CD4-positive, alpha-beta memory T cell (primary cell): ENCODE measurements at regions of chr17 and their contacts with region 1.

Region 1: DNA sequence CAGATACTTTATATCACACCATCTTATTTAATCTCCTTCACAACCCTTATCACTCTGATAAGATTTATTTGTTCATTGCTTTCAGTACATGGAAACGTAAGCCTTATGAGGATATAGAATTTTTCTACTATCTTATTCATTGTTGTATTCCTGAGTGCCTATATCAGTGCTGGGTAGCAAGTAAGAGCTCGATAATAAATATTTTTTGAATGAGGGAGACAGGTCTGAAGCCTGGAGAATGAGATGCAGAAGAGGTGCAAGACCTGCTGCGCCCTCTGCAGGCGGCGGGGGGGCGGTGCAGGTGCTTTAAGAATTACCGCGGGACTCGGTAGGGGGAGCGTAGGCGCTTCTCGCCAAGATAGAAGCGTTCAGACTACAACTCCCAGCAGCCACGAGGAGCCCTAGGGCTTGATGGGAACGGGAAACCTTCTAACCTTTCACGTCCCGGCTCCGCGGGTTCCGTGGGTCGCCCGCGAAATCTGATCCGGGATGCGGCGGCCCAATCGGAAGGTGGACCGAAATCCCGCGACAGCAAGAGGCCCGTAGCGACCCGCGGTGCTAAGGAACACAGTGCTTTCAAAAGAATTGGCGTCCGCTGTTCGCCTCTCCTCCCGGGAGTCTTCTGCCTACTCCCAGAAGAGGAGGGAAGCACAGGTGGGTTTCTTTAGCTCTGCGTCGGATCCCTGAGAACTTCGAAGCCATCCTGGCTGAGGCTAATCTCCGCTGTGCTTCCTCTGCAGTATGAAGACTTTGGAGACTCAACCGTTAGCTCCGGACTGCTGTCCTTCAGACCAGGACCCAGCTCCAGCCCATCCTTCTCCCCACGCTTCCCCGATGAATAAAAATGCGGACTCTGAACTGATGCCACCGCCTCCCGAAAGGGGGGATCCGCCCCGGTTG is at the start of gene WRAP53:
- DNase-seq: peak; percentile 95 to 97 (median 96)
- H3K4me3 ChIP-seq: peak within 1 kb of the TSS; percentile 100
- H3K4me3 Mint-ChIP-seq: peak within 1 kb of the TSS; percentile 93 to 98 (median 96)
- H3K27ac ChIP-seq: peak within 1 kb of the TSS; percentile 99
- H3K27ac Mint-ChIP-seq: peak within 1 kb of the TSS; percentile 98 to 100 (median 99)
- H3K4me1 ChIP-seq: peaks cover 40% of the 10 kb centered on the region
- H3K4me1 Mint-ChIP-seq: peaks cover 18 to 53% (median 40%) of the 10 kb centered on the region in 4 donors
- H3K27me3 ChIP-seq: no peaks in the 10 kb centered on the region
- H3K27me3 Mint-ChIP-seq: no peaks in the 10 kb centered on the region
- total RNA-seq, gene WRAP53: 11.9 to 12.5 TPM

Region 2: GRCh38 chr17:7306911-7307686 is 381.1 kb before region 1 on chr17 and contains the start of gene EIF5A:
- CTCF ChIA-PET with region 1: no interaction called
- POLR2A ChIA-PET with region 1: interaction called, 5 read pairs
- intact Hi-C with region 1: loop called (anchors 2 kb)
- DNase-seq: peak; percentile 99 to 100 (median 100)
- H3K4me3 ChIP-seq: peak within 1 kb of the TSS; percentile 81 to 85
- H3K4me3 Mint-ChIP-seq: peak within 1 kb of the TSS; percentile 93 to 97 (median 95)
- H3K27ac ChIP-seq: peak within 1 kb of the TSS; percentile 100
- H3K27ac Mint-ChIP-seq: peak within 1 kb of the TSS; percentile 99 to 100 (median 99)
- H3K4me1 ChIP-seq: peaks cover 35% of the 10 kb centered on the region
- H3K4me1 Mint-ChIP-seq: peaks cover 29 to 47% (median 36%) of the 10 kb centered on the region in 4 donors
- H3K27me3 ChIP-seq: no peaks in the 10 kb centered on the region
- H3K27me3 Mint-ChIP-seq: peaks cover 0 to 4% of the 10 kb centered on the region in 2 donors
- total RNA-seq, gene EIF5A: 240 to 244 TPM

Region 3: DNA sequence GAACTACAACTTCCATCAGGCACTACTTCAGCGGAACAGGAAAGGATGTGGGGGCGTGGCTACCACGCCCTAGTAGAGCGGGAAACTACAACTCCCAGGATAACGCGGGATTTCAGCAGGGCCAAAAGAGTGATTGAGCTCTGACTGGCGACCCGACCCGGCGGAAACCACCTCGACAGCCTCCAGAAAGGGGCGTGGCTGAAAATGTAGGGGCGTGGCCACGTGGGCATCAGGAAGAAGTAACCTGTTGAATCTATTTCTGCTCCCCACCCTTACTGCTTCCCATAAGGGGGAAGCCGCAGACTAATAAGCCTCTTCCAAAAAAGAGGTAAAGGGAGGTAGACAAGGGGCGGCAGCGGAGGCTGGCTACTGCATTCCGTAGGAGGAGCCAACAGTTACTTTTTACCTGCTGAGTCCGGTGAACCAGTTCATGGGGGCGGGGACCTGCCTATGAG is 252.9 kb before region 1 on chr17 and contains the start of gene TMEM102:
- CTCF ChIA-PET with region 1: interaction called, 17 read pairs
- POLR2A ChIA-PET with region 1: interaction called, 53 read pairs
- intact Hi-C with region 1: loop called (anchors 1 kb)
- DNase-seq: peak; percentile 98 to 99 (median 99)
- H3K4me3 ChIP-seq: peak within 1 kb of the TSS; percentile 89
- H3K4me3 Mint-ChIP-seq: peak within 1 kb of the TSS; percentile 89 to 96 (median 94)
- H3K27ac ChIP-seq: peak within 1 kb of the TSS; percentile 86
- H3K27ac Mint-ChIP-seq: peak within 1 kb of the TSS; percentile 94 to 99 (median 97)
- H3K4me1 ChIP-seq: peaks cover 37% of the 10 kb centered on the region
- H3K4me1 Mint-ChIP-seq: peaks cover 22 to 47% (median 34%) of the 10 kb centered on the region in 4 donors
- H3K27me3 ChIP-seq: peaks cover 17% of the 10 kb centered on the region
- H3K27me3 Mint-ChIP-seq: peaks cover 9 to 10% of the 10 kb centered on the region in 2 donors
- total RNA-seq, gene TMEM102: 20.8 to 21.8 TPM

Region 4: DNA sequence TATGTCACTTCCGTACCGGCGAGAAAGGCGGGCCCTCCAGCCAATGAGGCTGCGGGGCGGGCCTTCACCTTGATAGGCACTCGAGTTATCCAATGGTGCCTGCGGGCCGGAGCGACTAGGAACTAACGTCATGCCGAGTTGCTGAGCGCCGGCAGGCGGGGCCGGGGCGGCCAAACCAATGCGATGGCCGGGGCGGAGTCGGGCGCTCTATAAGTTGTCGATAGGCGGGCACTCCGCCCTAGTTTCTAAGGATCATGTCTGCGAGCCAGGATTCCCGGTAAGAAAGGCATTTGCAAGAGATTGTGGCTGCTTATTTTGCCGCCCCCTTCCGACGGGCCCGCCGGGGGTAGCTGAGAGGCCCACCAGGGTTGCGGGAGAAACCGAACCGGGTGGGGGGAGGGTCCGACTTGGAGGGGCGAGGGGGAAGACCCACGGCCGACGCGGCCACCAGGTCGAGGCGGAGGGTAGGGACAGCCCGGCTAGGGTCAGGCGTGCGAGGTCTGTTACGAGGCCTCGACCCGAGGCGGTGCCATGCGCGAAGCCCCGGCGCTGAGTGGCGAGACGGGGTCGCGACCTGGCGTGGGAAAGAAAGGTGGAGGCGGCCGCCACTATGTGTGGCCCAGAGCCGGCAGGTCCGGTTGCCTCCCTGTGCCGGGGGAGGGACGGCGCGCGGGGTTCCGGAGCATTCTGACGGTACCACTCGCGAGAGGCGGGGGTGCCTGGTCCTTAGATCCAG is 115.4 kb before region 1 on chr17:
- CTCF ChIA-PET with region 1: interaction called, 3 read pairs
- POLR2A ChIA-PET with region 1: interaction called, 97 read pairs
- intact Hi-C with region 1: loop called (anchors 1 kb)
- DNase-seq: peak; percentile 100
- H3K4me3 ChIP-seq: peak overlapping the region; percentile 57 to 93
- H3K4me3 Mint-ChIP-seq: peak overlapping the region; percentile 94 to 100 (median 98)
- H3K27ac ChIP-seq: peak overlapping the region; percentile 97
- H3K27ac Mint-ChIP-seq: peak overlapping the region; percentile 98 to 100 (median 99)
- H3K4me1 ChIP-seq: peaks cover 44% of the 10 kb centered on the region
- H3K4me1 Mint-ChIP-seq: peaks cover 25 to 62% (median 41%) of the 10 kb centered on the region in 4 donors
- H3K27me3 ChIP-seq: no peaks in the 10 kb centered on the region
- H3K27me3 Mint-ChIP-seq: no peaks in the 10 kb centered on the region

Region 5: DNA sequence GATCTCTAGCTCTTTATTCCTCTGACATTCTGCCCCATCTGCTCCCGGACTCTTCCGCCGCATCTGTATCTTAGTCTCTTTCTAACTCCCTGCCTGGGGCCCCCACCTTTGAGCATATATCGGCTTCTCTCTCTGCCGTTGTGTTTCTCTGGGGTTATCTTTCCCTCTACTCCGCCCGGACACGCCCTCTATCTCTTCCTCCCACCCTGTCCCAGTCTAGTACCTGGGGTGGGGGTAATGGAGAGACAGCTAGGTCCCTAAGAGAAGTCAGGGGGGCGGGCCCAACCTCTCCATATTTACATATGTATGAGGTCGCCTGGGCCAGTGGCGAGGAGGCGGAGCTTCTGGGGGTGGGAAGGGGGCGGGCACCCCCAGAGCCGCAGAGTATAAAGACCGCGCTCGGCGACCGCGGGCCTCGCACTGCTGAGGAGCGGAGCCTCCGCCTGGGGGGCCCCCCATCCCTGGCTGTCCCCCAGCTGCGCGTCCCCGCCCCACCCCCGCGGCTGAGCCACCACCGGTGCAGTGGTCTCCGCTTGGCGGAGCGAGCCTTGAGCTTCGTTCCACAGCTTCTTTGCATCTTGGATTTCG is 37.6 kb before region 1 on chr17 and contains the start of gene ATP1B2:
- CTCF ChIA-PET with region 1: interaction called, 5 read pairs
- POLR2A ChIA-PET with region 1: interaction called, 55 read pairs
- intact Hi-C with region 1: loop called (anchors 1 kb)
- DNase-seq: peak; percentile 60 to 88 (median 63)
- H3K4me3 ChIP-seq: peak within 1 kb of the TSS; percentile 39 to 46
- H3K4me3 Mint-ChIP-seq: peak within 1 kb of the TSS; percentile 84 to 92 (median 90)
- H3K27ac ChIP-seq: no peak within 1 kb of the TSS
- H3K27ac Mint-ChIP-seq: peak within 1 kb of the TSS in 6 of 7 donors; percentile 45 to 92 (median 59)
- H3K4me1 ChIP-seq: peaks cover 20% of the 10 kb centered on the region
- H3K4me1 Mint-ChIP-seq: peaks cover 10 to 16% (median 13%) of the 10 kb centered on the region in 4 donors
- H3K27me3 ChIP-seq: peaks cover 13% of the 10 kb centered on the region
- H3K27me3 Mint-ChIP-seq: peaks cover 17 to 29% of the 10 kb centered on the region in 2 donors
- total RNA-seq, gene ATP1B2: 0.22 to 0.52 TPM

Region 6: DNA sequence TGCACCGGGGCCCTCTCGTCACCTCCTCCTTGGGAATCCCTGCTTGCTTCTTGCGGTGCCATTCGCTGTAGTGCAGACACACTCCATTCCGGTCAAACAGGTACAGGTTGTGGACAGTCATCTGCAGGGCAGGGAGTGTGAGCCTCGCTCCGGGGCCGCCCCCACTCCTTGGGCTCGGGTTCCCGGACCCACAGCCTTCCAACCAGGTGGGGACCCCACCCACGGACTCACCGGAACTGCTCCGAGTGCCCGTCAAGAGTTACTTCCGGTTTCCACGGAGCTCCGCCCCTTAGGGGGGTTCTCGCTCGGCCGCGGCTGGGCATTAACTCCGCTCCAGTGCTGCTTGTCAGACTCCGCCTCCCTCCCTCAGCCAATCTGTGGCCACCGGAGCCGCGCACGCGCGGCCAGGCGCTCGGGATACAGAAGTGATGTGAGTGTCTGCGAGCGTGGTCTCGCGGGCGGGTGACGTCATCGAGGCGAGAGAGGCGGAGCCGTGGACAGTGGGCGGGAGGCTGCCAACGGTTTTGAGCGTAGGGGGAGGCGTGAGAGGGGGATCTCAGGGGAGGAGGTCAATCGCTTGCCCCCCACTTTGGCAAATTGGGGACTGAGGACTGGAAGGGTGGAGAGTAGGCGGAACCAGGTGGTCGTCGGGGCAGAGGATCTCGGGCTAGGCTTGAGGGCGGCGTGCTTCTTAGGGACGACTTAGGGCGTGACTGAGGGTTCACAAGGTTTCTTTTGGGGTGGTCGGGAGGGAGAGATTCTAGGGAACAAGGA is 243.7 kb after region 1 on chr17 and contains the starts of genes CNTROB and TRAPPC1:
- CTCF ChIA-PET with region 1: interaction called, 3 read pairs
- POLR2A ChIA-PET with region 1: interaction called, 20 read pairs
- intact Hi-C with region 1: no loop called
- DNase-seq: peak; percentile 99 to 100 (median 99)
- H3K4me3 ChIP-seq: peak within 1 kb of the TSS; percentile 84 to 100
- H3K4me3 Mint-ChIP-seq: peak within 1 kb of the TSS; percentile 94 to 100 (median 98)
- H3K27ac ChIP-seq: peak within 1 kb of the TSS; percentile 85
- H3K27ac Mint-ChIP-seq: peak within 1 kb of the TSS; percentile 88 to 100 (median 98)
- H3K4me1 ChIP-seq: peaks cover 33% of the 10 kb centered on the region
- H3K4me1 Mint-ChIP-seq: peaks cover 34 to 58% (median 44%) of the 10 kb centered on the region in 4 donors
- H3K27me3 ChIP-seq: no peaks in the 10 kb centered on the region
- H3K27me3 Mint-ChIP-seq: no peaks in the 10 kb centered on the region
- total RNA-seq, gene CNTROB: 29.7 to 30.1 TPM
- total RNA-seq, gene TRAPPC1: 116 TPM